ENCODE measurements at regions of chr3 and their contacts with region 1.

Region 1: GRCh38 chr3:50298836-50299637 is at the starts of genes HYAL3 and NAA80:
- DNase-seq: peak; percentile 98
- ATAC-seq: peak; percentile 89
- H3K4me3 Mint-ChIP-seq: peak within 1 kb of the TSS; percentile 98
- H3K27ac Mint-ChIP-seq: peak within 1 kb of the TSS; percentile 98
- H3K4me1 Mint-ChIP-seq: peaks cover 30% of the 10 kb centered on the region
- H3K27me3 Mint-ChIP-seq: no peaks in the 10 kb centered on the region
- CTCF ChIP-seq: no peak
- total RNA-seq, gene HYAL3: 2.0 and 2.5 TPM in 2 replicates
- total RNA-seq, gene NAA80: 23.9 and 24.8 TPM in 2 replicates

Region 2: GRCh38 chr3:50235716-50236496 is 63.1 kb before region 1 on chr3 and contains the start of gene GNAI2:
- CTCF ChIA-PET with region 1: no interaction called
- POLR2A ChIA-PET with region 1: interaction called, 5 read pairs
- intact Hi-C with region 1: loop called (anchors 1 kb)
- DNase-seq: peak; percentile 97
- ATAC-seq: peak; percentile 89
- H3K4me3 Mint-ChIP-seq: peak within 1 kb of the TSS; percentile 95
- H3K27ac Mint-ChIP-seq: peak within 1 kb of the TSS; percentile 91
- H3K4me1 Mint-ChIP-seq: peaks cover 54% of the 10 kb centered on the region
- H3K27me3 Mint-ChIP-seq: no peaks in the 10 kb centered on the region
- CTCF ChIP-seq: no peak
- total RNA-seq, gene GNAI2: 281 and 295 TPM in 2 replicates

Region 3: DNA sequence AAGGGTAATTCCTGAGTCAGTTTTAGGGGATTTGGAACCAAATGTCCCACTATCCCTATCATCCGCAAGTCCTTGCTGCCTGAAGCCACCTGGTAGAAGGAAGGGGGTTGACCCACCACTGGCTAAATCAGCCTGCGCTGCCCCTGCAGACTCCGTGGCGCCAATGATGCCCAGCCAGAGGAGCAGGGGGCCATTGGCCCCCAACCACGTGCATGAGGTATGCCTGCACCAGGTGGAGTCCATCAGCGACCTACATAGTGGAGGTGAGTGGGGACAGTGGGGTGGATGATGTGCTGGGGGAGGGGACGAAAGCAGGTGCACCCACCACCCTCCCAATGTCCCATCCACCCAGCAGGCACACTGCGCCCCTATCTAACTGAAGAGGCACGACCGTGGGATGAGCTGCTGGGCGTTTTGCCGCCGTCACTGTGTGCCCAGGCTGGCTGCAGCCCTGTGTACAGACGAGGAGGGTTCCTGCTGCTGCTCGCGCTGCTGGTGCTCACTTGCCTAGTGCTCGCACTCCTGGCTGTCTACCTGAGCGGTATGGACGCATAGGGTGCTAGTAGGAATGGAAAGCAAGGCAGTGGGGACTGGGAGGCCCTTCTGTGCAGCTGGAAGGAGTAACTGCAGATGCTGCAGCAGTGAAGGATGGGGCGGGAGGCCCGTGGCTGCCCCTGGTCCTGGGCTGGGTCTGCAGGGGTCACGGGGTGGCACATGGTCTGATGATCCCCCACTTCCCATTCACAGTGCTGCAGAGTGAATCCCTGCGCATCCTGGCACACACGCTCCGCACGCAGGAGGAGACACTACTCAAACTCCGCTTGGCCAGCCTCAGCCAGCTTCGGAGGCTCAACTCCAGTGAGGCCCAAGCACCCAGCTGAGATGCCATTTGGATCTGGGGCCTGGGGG is 12.5 kb before region 1 on chr3:
- CTCF ChIA-PET with region 1: no interaction called
- POLR2A ChIA-PET with region 1: no interaction called
- intact Hi-C with region 1: no loop called
- DNase-seq: no peak
- ATAC-seq: no peak
- H3K4me3 Mint-ChIP-seq: no peak overlapping the region
- H3K27ac Mint-ChIP-seq: no peak overlapping the region
- H3K4me1 Mint-ChIP-seq: peaks cover 6% of the 10 kb centered on the region
- H3K27me3 Mint-ChIP-seq: no peaks in the 10 kb centered on the region
- CTCF ChIP-seq: no peak

Region 4: DNA sequence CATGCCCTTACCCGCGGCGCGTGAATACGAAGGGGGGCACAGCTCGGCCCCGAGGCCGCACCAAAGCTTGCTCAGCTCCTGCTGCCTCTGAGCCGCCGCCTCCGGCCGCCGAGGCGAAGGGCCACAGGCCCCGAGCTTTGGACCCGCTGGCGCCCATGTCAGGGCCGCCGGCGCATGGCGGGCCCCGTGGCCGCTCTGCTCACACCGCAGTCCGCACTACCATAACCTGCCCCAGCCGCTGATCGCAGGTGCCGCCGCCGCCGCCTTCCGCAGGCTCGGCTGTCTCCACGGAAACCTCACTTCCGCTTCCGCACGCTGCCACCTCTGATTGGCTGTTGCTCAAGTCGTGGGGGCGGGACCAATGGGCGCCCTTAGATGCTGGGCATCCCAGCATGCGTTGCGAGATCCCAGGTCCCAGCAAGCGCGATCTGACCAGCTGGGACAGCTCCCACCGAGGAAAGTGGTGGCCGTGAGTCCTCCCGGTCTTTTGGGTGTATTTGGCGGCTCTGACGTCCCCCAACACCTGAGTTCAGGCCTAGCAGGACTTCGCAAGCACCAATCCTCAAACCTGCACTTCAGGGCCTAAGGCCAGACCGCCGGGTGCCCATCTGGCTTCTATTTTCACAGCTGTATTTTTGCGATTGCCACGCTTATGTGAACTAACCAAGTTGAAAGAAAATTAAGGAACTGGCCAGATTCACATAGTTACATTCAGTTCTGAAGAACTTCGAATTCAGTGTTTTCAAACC is 29.1 kb after region 1 on chr3 and contains the start of gene TUSC2:
- CTCF ChIA-PET with region 1: interaction called, 5 read pairs
- POLR2A ChIA-PET with region 1: interaction called, 22 read pairs
- intact Hi-C with region 1: no loop called
- DNase-seq: peak; percentile 91
- ATAC-seq: peak; percentile 96
- H3K4me3 Mint-ChIP-seq: peak within 1 kb of the TSS; percentile 92
- H3K27ac Mint-ChIP-seq: peak within 1 kb of the TSS; percentile 84
- H3K4me1 Mint-ChIP-seq: peaks cover 25% of the 10 kb centered on the region
- H3K27me3 Mint-ChIP-seq: no peaks in the 10 kb centered on the region
- CTCF ChIP-seq: no peak
- total RNA-seq, gene TUSC2: 32.2 and 33.4 TPM in 2 replicates

Region 5: GRCh38 chr3:50337191-50337841 is 38.3 kb after region 1 on chr3:
- CTCF ChIA-PET with region 1: interaction called, 6 read pairs
- POLR2A ChIA-PET with region 1: interaction called, 62 read pairs
- intact Hi-C with region 1: loop called (anchors 1 kb)
- DNase-seq: peak; percentile 90
- ATAC-seq: peak; percentile 83
- H3K4me3 Mint-ChIP-seq: peak overlapping the region; percentile 95
- H3K27ac Mint-ChIP-seq: peak overlapping the region; percentile 98
- H3K4me1 Mint-ChIP-seq: peaks cover 66% of the 10 kb centered on the region
- H3K27me3 Mint-ChIP-seq: no peaks in the 10 kb centered on the region
- CTCF ChIP-seq: no peak